Naive thymus-derived CD4-positive, alpha-beta T cell (primary cell): ENCODE measurements at regions of chrX and their contacts with region 1.

Region 1: GRCh38 chrX:152958524-152959465 is 35.1 kb downstream of the PNMA5 start:
- DNase-seq: peak; percentile 79 to 95 (median 89)
- ATAC-seq: peak; percentile 98
- H3K4me3 ChIP-seq: peak overlapping the region; percentile 52
- H3K4me3 Mint-ChIP-seq: peak overlapping the region; percentile 71 to 87 (median 77)
- H3K27ac ChIP-seq: peak overlapping the region; percentile 72
- H3K27ac Mint-ChIP-seq: peak overlapping the region; percentile 89 to 97 (median 93)
- H3K4me1 ChIP-seq: peaks cover 0 to 8% of the 10 kb centered on the region in 2 donors
- H3K4me1 Mint-ChIP-seq: peaks cover 0 to 12% (median 4%) of the 10 kb centered on the region in 7 donors
- H3K27me3 ChIP-seq: no peaks in the 10 kb centered on the region
- H3K27me3 Mint-ChIP-seq: peaks cover 0 to 4% (median 0%) of the 10 kb centered on the region in 5 donors

Region 2: GRCh38 chrX:152926279-152926678 is 32.5 kb before region 1 on chrX:
- CTCF ChIA-PET with region 1: no interaction called
- POLR2A ChIA-PET with region 1: no interaction called
- intact Hi-C with region 1: no loop called
- DNase-seq: peak in 7 of 9 donors; percentile 5 to 36 (median 27)
- ATAC-seq: peak; percentile 77
- H3K4me3 ChIP-seq: no peak overlapping the region
- H3K4me3 Mint-ChIP-seq: no peak overlapping the region
- H3K27ac ChIP-seq: no peak overlapping the region
- H3K27ac Mint-ChIP-seq: no peak overlapping the region
- H3K4me1 ChIP-seq: no peaks in the 10 kb centered on the region
- H3K4me1 Mint-ChIP-seq: peaks cover 0 to 17% (median 9%) of the 10 kb centered on the region in 7 donors
- H3K27me3 ChIP-seq: no peaks in the 10 kb centered on the region
- H3K27me3 Mint-ChIP-seq: no peaks in the 10 kb centered on the region

Region 3: GRCh38 chrX:153032397-153033118 is 73.8 kb after region 1 on chrX:
- CTCF ChIA-PET with region 1: interaction called, 5 read pairs
- POLR2A ChIA-PET with region 1: no interaction called
- intact Hi-C with region 1: loop called (anchors 1 to 2 kb)
- DNase-seq: peak; percentile 32 to 75 (median 53)
- ATAC-seq: peak; percentile 87
- H3K4me3 ChIP-seq: peak overlapping the region; percentile 69
- H3K4me3 Mint-ChIP-seq: peak overlapping the region; percentile 78 to 90 (median 86)
- H3K27ac ChIP-seq: peak overlapping the region; percentile 53
- H3K27ac Mint-ChIP-seq: peak overlapping the region; percentile 68 to 93 (median 87)
- H3K4me1 ChIP-seq: peaks cover 7 to 9% of the 10 kb centered on the region in 2 donors
- H3K4me1 Mint-ChIP-seq: peaks cover 0 to 11% (median 4%) of the 10 kb centered on the region in 7 donors
- H3K27me3 ChIP-seq: no peaks in the 10 kb centered on the region
- H3K27me3 Mint-ChIP-seq: no peaks in the 10 kb centered on the region

Region 4: GRCh38 chrX:153381684-153382532 is 423.1 kb after region 1 on chrX:
- CTCF ChIA-PET with region 1: no interaction called
- POLR2A ChIA-PET with region 1: no interaction called
- intact Hi-C with region 1: loop called in 1 of 2 experiments (anchors 2 kb)
- DNase-seq: peak in 5 of 9 donors; percentile 5 to 31 (median 14)
- ATAC-seq: peak; percentile 65
- H3K4me3 ChIP-seq: no peak overlapping the region
- H3K4me3 Mint-ChIP-seq: no peak overlapping the region
- H3K27ac ChIP-seq: no peak overlapping the region
- H3K27ac Mint-ChIP-seq: peak overlapping the region in 1 of 9 donors; percentile 66
- H3K4me1 ChIP-seq: no peaks in the 10 kb centered on the region
- H3K4me1 Mint-ChIP-seq: peaks cover 0 to 4% (median 0%) of the 10 kb centered on the region in 7 donors
- H3K27me3 ChIP-seq: no peaks in the 10 kb centered on the region
- H3K27me3 Mint-ChIP-seq: no peaks in the 10 kb centered on the region

Region 5: GRCh38 chrX:153507484-153508178 is 548.8 kb after region 1 on chrX:
- CTCF ChIA-PET with region 1: interaction called, 3 read pairs
- POLR2A ChIA-PET with region 1: no interaction called
- intact Hi-C with region 1: loop called (anchors 1 kb)
- DNase-seq: peak; percentile 67 to 83 (median 77)
- ATAC-seq: peak; percentile 99
- H3K4me3 ChIP-seq: no peak overlapping the region
- H3K4me3 Mint-ChIP-seq: peak overlapping the region in 2 of 10 donors; percentile 9 to 13
- H3K27ac ChIP-seq: no peak overlapping the region
- H3K27ac Mint-ChIP-seq: peak overlapping the region in 2 of 9 donors; percentile 32 to 46
- H3K4me1 ChIP-seq: peaks cover 0 to 4% of the 10 kb centered on the region in 2 donors
- H3K4me1 Mint-ChIP-seq: peaks cover 0 to 6% (median 0%) of the 10 kb centered on the region in 7 donors
- H3K27me3 ChIP-seq: no peaks in the 10 kb centered on the region
- H3K27me3 Mint-ChIP-seq: no peaks in the 10 kb centered on the region

Region 6: DNA sequence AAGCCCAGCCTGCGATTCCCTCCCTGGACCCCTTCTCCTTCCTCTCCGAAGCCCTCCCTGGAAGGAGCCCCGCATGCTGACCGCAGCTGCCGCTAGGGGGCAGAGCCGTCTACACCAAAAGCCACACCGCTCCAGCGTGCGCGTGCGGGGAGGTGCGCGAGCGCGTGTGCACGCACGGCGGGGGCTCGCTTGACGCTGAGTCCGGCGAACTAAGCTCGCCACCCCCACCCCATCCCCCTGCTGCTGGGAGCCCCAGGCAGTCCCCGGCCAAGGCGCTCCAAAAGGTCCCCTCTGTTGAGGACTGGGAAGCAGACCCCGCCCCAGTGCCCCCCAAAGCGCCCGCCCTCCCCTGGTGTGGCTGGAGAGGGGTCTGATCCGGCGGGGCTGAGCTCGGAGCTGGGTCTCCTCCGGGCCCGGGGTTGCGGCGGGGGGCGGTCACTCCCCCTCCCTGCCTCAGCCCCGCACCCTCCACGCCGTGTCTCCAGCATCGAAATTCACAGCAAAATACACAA is 651.2 kb after region 1 on chrX:
- CTCF ChIA-PET with region 1: interaction called, 3 read pairs
- POLR2A ChIA-PET with region 1: no interaction called
- intact Hi-C with region 1: loop called in 1 of 2 experiments (anchors 1 kb)
- DNase-seq: peak; percentile 58 to 78 (median 71)
- ATAC-seq: peak; percentile 96
- H3K4me3 ChIP-seq: peak overlapping the region; percentile 44
- H3K4me3 Mint-ChIP-seq: peak overlapping the region; percentile 77 to 87 (median 85)
- H3K27ac ChIP-seq: peak overlapping the region; percentile 60
- H3K27ac Mint-ChIP-seq: peak overlapping the region in 8 of 9 donors; percentile 41 to 85 (median 76)
- H3K4me1 ChIP-seq: peaks cover 0 to 5% of the 10 kb centered on the region in 2 donors
- H3K4me1 Mint-ChIP-seq: peaks cover under 1 to 13% (median 7%) of the 10 kb centered on the region in 7 donors
- H3K27me3 ChIP-seq: no peaks in the 10 kb centered on the region
- H3K27me3 Mint-ChIP-seq: peaks cover 0 to 16% (median 0%) of the 10 kb centered on the region in 5 donors

Region 7: DNA sequence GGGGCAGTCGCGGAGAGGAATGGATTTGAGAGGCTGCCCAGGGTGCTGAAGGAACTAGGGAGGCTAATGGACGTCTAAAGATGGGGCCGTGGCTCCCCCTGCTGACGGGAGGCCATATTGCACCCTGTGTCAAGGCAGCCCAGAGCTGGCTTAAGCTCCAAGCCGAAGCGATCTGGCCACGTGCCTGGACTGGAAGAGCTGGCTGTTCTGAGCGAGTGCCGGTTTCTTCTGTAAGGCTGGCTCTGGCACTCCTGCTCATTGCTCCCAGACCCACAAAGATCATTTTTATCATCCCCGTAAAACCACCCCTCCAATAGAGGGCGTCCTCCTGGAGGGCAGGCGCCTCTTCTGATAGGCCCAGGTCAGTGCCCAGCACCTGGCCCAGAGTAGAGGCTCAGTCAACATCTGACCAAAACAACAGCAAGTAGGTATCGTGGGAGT is 709.2 kb after region 1 on chrX:
- CTCF ChIA-PET with region 1: interaction called, 4 read pairs
- POLR2A ChIA-PET with region 1: no interaction called
- intact Hi-C with region 1: loop called (anchors 1 kb)
- DNase-seq: peak; percentile 51 to 78 (median 65)
- ATAC-seq: peak; percentile 93
- H3K4me3 ChIP-seq: no peak overlapping the region
- H3K4me3 Mint-ChIP-seq: peak overlapping the region; percentile 53 to 82 (median 74)
- H3K27ac ChIP-seq: no peak overlapping the region
- H3K27ac Mint-ChIP-seq: peak overlapping the region in 4 of 9 donors; percentile 2 to 51 (median 37)
- H3K4me1 ChIP-seq: no peaks in the 10 kb centered on the region
- H3K4me1 Mint-ChIP-seq: peaks cover 5 to 10% (median 7%) of the 10 kb centered on the region in 7 donors
- H3K27me3 ChIP-seq: no peaks in the 10 kb centered on the region
- H3K27me3 Mint-ChIP-seq: peaks cover 0 to 28% (median 7%) of the 10 kb centered on the region in 5 donors